GM18951 (cell line): ENCODE measurements at regions of chr4 and their contacts with region 1.

Region 1: GRCh38 chr4:384311-385010 is 46.8 kb downstream of the ZNF141 start:
- POLR2A ChIP-seq: no peak

Region 2: DNA sequence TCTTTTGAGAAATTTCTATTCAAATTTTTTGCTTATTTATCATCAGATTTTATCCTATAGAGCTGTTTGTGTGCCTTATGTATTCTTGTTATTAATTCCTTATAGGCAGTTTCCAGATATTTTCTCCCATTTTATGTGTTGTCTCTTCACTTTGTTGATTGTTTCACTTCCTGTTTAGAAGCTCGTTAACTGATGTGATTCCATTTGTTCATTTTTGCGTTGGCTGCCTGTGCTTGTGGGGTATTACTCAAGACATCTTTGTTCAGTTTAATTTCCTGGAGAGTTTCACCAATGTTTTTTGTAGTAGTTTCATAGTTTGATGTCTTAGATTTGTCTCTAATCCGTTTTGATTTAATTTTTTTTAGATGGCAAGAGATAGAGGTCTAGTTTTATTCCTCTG is 245.5 kb before region 1 on chr4:
- in situ Hi-C with region 1: no loop called
- POLR2A ChIP-seq: no peak

Region 3: GRCh38 chr4:610411-611261 is 226.2 kb after region 1 on chr4:
- in situ Hi-C with region 1: loop called (anchors 10 kb)
- POLR2A ChIP-seq: no peak